Activated CD4-positive, alpha-beta memory T cell treated with anti-CD3 and anti-CD28 coated beads for 36 hours (primary cell): ENCODE measurements at regions of chr19 and their contacts with region 1.

Region 1: DNA sequence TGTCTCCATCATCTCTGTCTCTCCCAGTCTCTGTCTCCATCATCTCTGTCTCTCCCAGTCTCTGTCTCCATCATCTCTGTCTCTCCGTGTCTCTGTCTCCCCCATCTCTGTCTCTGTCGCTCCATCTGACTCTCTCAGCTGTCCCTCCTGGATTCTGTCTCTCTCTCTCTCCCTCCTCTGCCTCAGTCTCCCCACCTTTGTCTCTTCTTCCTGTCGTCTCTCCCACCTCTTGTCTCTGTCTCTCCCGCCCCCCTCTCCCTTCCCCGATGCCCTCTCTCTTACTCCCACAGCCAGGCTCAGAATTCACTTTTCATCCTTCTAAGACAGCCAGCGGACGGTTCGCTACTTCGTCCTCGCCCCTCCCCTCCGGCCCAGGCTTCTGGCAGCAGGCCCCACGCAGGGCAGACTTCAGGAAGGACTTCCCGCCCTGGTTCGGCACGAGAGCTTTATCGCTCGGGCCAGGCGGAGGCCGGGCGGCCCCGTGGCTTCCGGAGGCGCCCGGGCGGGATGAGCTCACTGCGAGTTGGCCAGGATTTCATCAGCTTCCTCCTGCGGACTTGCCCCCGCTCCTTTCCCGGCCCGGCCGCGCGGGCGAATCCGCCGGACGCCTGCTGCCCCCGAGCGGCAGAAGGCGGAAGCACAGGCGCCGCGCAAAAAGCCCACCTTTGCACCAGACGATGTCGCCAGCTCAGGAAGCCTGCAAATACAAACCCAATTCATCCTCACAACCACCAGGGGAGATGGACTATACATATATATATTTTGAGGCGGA is 12.4 kb upstream of the CCDC9 start:
- DNase-seq: peak; percentile 96
- H3K4me3 Mint-ChIP-seq: peak overlapping the region; percentile 76
- H3K27ac Mint-ChIP-seq: peak overlapping the region; percentile 90
- H3K4me1 Mint-ChIP-seq: peaks cover 25% of the 10 kb centered on the region
- H3K27me3 Mint-ChIP-seq: peaks cover under 1% of the 10 kb centered on the region

Region 2: DNA sequence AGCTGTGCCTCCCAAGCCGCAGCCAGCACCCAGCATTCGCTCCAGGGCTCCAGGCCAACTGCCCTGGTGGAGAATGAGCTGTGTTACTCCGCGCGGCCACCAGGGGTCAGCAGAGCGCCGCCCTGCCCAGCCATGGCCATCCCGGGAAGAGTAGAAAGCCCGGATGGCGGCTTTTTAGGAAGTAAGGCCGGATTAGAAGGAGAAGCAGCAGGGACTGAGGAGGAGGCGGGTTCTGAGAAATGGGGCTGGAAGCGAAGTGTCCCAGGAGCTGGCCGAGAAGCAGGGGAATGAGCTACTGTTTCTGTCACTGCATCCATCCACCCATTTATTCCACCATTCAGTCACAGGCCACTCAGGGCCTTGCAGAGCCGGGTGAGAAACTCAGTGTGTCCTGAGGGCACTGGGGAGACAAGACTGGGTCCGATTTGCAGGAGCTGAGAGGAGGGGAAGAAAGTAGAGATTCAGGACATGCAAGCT is 230.9 kb before region 1 on chr19:
- CTCF ChIA-PET with region 1: interaction called, 31 read pairs
- POLR2A ChIA-PET with region 1: interaction called, 5 read pairs
- intact Hi-C with region 1: no loop called
- DNase-seq: peak; percentile 77
- H3K4me3 Mint-ChIP-seq: no peak overlapping the region
- H3K27ac Mint-ChIP-seq: no peak overlapping the region
- H3K4me1 Mint-ChIP-seq: peaks cover 10% of the 10 kb centered on the region
- H3K27me3 Mint-ChIP-seq: peaks cover 4% of the 10 kb centered on the region

Region 3: GRCh38 chr19:47081111-47081510 is 162.9 kb before region 1 on chr19:
- CTCF ChIA-PET with region 1: interaction called, 10 read pairs
- POLR2A ChIA-PET with region 1: interaction called, 5 read pairs
- intact Hi-C with region 1: no loop called
- DNase-seq: no peak
- H3K4me3 Mint-ChIP-seq: no peak overlapping the region
- H3K27ac Mint-ChIP-seq: peak overlapping the region; percentile 49
- H3K4me1 Mint-ChIP-seq: no peaks in the 10 kb centered on the region
- H3K27me3 Mint-ChIP-seq: no peaks in the 10 kb centered on the region

Region 4: GRCh38 chr19:47157431-47158321 is 86.3 kb before region 1 on chr19:
- CTCF ChIA-PET with region 1: interaction called, 151 read pairs
- POLR2A ChIA-PET with region 1: interaction called, 10 read pairs
- intact Hi-C with region 1: no loop called
- DNase-seq: peak; percentile 49
- H3K4me3 Mint-ChIP-seq: peak overlapping the region; percentile 43
- H3K27ac Mint-ChIP-seq: peak overlapping the region; percentile 84
- H3K4me1 Mint-ChIP-seq: peaks cover 64% of the 10 kb centered on the region
- H3K27me3 Mint-ChIP-seq: no peaks in the 10 kb centered on the region

Region 5: DNA sequence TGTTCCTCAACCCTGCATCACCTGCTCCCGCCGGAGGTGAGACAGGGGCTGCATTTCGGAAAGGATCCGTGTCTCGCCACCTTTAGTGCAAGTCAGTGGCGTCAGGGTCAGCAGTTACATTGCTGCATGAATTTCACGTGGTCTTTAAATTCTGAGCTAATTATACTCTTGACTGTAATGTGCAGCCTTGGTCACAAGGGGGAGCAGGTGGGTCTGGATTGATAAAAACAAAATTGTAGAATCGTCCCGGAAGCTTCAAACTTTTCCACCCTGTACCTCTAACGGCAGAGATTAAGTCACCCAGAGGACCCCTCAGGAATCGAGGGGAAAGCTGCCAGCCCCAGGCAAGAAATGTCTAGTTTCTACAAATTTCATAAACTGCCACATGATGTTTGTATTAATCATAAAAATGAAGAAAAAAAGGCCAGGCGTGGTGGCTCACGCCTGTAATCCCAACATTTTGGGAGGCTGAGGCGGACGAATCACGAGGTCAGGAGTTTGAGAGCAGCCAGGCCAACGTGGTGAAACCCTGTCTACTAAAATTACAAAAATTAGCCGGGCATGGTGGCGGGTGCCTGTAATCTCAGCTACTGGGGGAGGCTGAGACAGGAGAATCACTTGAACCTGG is 33.2 kb before region 1 on chr19:
- CTCF ChIA-PET with region 1: interaction called, 333 read pairs
- POLR2A ChIA-PET with region 1: interaction called, 49 read pairs
- intact Hi-C with region 1: loop called (anchors 1 kb)
- DNase-seq: peak; percentile 85
- H3K4me3 Mint-ChIP-seq: no peak overlapping the region
- H3K27ac Mint-ChIP-seq: peak overlapping the region; percentile 85
- H3K4me1 Mint-ChIP-seq: peaks cover 12% of the 10 kb centered on the region
- H3K27me3 Mint-ChIP-seq: no peaks in the 10 kb centered on the region

Region 6: DNA sequence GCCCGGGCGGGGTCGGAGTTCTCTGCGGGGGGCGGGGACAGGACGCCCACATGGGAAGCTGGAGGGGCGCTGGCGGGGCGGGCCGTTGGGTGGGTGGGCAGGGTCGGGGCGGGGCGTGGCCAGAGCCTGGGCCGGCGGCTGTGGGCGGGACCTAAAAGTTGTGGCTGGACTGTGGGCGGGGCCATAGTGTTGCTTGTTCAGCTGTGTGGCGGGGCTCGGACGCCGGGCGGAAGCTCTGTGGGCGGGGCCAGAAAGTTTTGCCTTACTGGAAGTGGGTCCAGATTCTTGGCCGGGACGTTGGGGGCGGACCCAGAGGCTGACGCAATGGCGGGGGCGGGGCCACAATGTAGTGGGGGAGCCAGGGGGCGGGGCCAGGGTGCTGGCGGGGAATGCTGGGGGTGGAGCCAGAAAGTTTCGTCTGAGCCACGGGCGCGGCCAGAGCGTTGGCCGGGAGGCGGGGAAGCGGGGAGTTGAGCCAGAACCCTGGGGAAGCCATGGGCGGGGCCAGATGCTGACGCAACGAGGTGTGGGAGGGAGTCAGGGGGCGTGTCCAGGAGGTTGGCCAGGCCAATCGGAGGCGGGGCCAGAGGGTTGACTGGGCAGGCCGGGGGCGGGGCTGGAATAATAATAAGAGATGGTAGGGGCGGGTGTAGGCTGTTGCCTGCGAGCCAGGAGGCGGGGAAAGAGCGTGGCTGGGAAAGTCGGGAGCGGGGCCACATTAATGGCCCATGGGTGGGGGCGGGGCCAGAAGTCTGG is 12.9 kb after region 1 on chr19:
- CTCF ChIA-PET with region 1: interaction called, 94 read pairs
- POLR2A ChIA-PET with region 1: interaction called, 25 read pairs
- intact Hi-C with region 1: loop called (anchors 1 kb)
- DNase-seq: peak; percentile 100
- H3K4me3 Mint-ChIP-seq: peak overlapping the region; percentile 90
- H3K27ac Mint-ChIP-seq: peak overlapping the region; percentile 98
- H3K4me1 Mint-ChIP-seq: peaks cover 32% of the 10 kb centered on the region
- H3K27me3 Mint-ChIP-seq: no peaks in the 10 kb centered on the region

Region 7: GRCh38 chr19:47267350-47267759 is 23.4 kb after region 1 on chr19:
- CTCF ChIA-PET with region 1: no interaction called
- POLR2A ChIA-PET with region 1: no interaction called
- intact Hi-C with region 1: no loop called
- DNase-seq: no peak
- H3K4me3 Mint-ChIP-seq: no peak overlapping the region
- H3K27ac Mint-ChIP-seq: no peak overlapping the region
- H3K4me1 Mint-ChIP-seq: peaks cover 3% of the 10 kb centered on the region
- H3K27me3 Mint-ChIP-seq: no peaks in the 10 kb centered on the region